Activated CD4-positive, alpha-beta memory T cell treated with anti-CD3 and anti-CD28 coated beads for 36 hours (primary cell): ENCODE measurements at regions of chr9 and their contacts with region 1.

Region 1: GRCh38 chr9:15277400-15278090 is 29.5 kb downstream of the TTC39B start:
- DNase-seq: no peak
- H3K4me3 Mint-ChIP-seq: no peak overlapping the region
- H3K27ac Mint-ChIP-seq: peak overlapping the region; percentile 51
- H3K4me1 Mint-ChIP-seq: peaks cover 27% of the 10 kb centered on the region
- H3K27me3 Mint-ChIP-seq: no peaks in the 10 kb centered on the region

Region 2: DNA sequence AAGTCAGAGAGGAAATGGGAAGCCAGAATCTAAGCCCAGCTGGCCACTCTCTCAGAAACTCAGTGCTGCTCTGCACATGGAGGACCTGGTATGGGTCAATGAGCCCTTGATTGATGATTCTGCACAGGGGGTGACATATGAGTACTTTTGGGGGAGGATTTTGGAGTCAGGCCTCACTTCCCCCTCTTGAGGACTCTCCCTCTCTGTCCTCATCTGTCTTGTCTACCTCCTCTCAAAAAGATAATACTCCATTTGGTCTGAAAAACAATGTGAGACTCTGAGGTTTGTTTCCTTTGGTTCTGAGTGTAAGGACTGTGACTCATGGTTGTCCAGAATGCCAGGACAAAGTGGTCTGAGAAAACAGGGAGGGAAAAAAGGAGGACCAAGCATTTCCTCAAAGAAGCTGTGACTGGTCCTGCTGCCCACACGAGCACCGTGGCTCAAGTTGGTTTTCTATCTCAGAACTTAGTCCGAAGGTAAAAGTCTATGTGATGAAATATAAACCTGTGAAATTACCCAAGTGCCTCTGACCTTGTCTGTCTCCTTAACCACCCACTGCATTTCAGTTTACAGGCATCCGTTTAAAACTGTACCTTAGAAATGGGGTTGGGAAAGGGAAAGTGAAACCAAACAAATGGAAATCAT is 18.3 kb after region 1 on chr9:
- CTCF ChIA-PET with region 1: interaction called, 6 read pairs
- POLR2A ChIA-PET with region 1: no interaction called
- intact Hi-C with region 1: loop called (anchors 2 kb)
- DNase-seq: peak; percentile 37
- H3K4me3 Mint-ChIP-seq: peak overlapping the region; percentile 69
- H3K27ac Mint-ChIP-seq: peak overlapping the region; percentile 97
- H3K4me1 Mint-ChIP-seq: peaks cover 84% of the 10 kb centered on the region
- H3K27me3 Mint-ChIP-seq: no peaks in the 10 kb centered on the region

Region 3: DNA sequence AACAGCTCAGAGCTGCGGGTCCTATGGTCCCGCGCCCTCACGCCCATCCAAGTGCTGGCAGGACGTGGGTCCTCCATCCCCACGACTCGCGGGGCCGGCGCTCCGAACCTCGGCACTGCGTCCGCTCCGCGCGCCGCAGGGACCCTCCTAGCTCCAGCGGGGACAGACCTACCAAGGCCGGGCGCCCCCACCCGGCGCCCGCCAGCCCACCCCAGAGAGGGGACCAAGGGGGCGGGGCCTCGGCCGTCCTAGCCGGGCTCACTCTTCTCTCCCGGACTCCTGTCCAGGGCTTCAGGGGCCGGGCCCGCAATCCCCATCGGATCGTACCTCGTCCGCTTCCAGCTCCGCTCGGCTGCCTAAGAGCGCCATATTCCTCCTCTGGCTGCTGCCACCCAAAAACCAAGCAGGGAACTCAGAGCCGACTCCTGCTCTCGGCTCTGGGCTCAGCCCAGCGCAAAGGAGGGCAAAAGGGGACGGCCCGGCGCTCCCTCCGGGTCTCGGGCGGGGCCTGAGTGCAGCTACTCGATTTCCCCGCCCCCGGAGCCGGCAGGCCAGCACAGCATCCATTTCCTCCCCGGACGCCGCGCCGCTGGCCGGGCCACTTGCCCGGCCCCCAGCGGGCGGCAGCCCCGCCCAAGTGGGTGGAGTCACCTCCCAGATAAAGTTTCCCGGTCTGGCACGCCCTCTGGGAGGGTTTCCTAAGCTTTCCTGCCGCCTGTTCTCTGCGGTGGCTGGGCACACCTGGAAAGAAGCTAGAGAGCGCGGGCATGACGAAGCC is 29.4 kb after region 1 on chr9 and contains the start of gene TTC39B:
- CTCF ChIA-PET with region 1: interaction called, 15 read pairs
- POLR2A ChIA-PET with region 1: no interaction called
- intact Hi-C with region 1: loop called (anchors 1 kb)
- DNase-seq: peak; percentile 89
- H3K4me3 Mint-ChIP-seq: peak within 1 kb of the TSS; percentile 99
- H3K27ac Mint-ChIP-seq: peak within 1 kb of the TSS; percentile 96
- H3K4me1 Mint-ChIP-seq: peaks cover 48% of the 10 kb centered on the region
- H3K27me3 Mint-ChIP-seq: no peaks in the 10 kb centered on the region
- total RNA-seq, gene TTC39B: 30.3 to 31.7 TPM

Region 4: DNA sequence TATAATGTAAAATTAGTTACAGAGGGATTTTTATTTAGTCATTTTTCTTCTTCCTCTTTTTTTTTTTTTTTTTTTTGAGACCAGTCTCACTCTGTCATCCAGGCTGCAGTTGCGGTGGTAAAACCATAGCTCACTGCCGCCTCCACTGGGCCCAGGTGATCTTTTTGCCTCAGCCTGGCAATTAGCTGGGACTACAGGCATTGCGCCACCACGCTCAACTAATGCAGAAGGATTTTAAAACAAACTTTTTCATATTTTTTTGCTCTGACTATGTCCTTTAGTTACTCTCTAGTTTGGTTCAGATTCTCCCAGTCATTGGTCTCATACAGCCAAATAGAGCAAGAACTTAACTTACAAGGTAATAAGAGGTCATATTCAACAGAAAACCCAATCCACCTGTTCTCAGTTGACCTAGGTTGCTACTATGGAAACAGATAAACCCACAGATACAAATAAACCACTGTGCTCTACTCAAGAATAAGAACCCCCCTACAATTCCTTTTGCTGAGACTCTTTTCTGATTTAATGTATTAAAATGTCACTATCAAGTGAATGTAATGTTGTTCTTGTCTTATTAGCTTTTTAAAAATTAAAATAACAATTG is 79.6 kb after region 1 on chr9:
- CTCF ChIA-PET with region 1: interaction called, 3 read pairs
- POLR2A ChIA-PET with region 1: no interaction called
- intact Hi-C with region 1: loop called (anchors 5 kb)
- DNase-seq: peak; percentile 16
- H3K4me3 Mint-ChIP-seq: no peak overlapping the region
- H3K27ac Mint-ChIP-seq: no peak overlapping the region
- H3K4me1 Mint-ChIP-seq: peaks cover 8% of the 10 kb centered on the region
- H3K27me3 Mint-ChIP-seq: no peaks in the 10 kb centered on the region

Region 5: DNA sequence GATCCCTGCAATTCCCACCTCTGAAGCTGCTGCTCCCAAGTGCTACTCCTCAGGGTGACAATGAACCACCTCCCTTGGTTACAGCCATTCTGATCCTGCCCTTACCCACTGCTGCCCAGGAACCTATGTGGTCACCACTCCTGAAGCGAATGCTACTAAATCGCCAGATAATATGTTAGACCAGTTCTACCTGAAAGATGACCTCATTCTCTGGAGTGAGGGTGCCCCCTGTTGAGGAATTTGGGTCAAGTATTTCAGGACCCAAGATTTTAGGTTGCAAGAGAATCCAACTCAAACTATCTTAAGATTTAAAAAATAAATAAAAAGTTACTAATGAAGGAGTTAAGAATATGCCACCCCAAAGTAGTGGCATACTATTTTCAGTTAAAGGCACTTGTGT is 139.3 kb after region 1 on chr9:
- CTCF ChIA-PET with region 1: interaction called, 5 read pairs
- POLR2A ChIA-PET with region 1: no interaction called
- intact Hi-C with region 1: loop called (anchors 2 kb)
- DNase-seq: peak; percentile 48
- H3K4me3 Mint-ChIP-seq: no peak overlapping the region
- H3K27ac Mint-ChIP-seq: no peak overlapping the region
- H3K4me1 Mint-ChIP-seq: no peaks in the 10 kb centered on the region
- H3K27me3 Mint-ChIP-seq: no peaks in the 10 kb centered on the region

Region 6: DNA sequence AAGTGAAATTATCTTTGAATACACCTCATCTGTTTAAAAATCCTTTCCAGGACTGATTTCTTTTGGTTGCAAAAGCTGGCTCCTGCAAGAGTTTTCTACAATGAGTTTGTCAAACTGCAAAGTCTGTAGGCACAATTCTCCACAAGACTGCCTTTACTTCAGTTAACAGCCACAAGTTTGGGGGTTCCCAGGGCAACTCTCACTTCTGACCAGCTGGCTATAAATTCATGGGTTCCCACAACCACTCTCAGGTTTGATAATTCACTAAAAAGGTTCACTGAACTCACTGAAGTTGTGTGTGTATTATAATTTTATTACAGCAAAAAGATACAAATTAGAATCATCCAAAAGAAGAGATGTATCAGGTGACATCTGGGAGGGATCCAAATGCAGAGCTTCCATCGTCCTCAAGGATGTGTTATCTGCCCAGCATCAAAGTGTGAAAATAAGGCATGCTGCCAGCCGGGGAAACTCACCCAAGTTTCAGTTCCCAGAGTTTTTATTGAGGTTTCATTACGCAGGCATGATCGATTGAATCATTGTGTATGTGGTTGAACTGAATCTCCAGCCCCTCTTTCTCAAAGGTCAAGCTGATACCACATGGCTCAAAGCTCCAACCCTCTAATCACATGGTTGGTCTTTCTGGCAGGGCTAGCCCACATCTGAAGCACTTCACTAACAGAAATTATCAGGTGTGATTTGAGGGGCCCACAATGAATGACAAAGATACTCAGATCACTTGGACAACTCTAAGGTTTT is 252.2 kb after region 1 on chr9:
- CTCF ChIA-PET with region 1: interaction called, 3 read pairs
- POLR2A ChIA-PET with region 1: no interaction called
- intact Hi-C with region 1: loop called (anchors 2 kb)
- DNase-seq: no peak
- H3K4me3 Mint-ChIP-seq: no peak overlapping the region
- H3K27ac Mint-ChIP-seq: no peak overlapping the region
- H3K4me1 Mint-ChIP-seq: peaks cover 9% of the 10 kb centered on the region
- H3K27me3 Mint-ChIP-seq: no peaks in the 10 kb centered on the region